WTC11 (cell line): ENCODE measurements at regions of chr12 and their contacts with region 1.

Region 1: DNA sequence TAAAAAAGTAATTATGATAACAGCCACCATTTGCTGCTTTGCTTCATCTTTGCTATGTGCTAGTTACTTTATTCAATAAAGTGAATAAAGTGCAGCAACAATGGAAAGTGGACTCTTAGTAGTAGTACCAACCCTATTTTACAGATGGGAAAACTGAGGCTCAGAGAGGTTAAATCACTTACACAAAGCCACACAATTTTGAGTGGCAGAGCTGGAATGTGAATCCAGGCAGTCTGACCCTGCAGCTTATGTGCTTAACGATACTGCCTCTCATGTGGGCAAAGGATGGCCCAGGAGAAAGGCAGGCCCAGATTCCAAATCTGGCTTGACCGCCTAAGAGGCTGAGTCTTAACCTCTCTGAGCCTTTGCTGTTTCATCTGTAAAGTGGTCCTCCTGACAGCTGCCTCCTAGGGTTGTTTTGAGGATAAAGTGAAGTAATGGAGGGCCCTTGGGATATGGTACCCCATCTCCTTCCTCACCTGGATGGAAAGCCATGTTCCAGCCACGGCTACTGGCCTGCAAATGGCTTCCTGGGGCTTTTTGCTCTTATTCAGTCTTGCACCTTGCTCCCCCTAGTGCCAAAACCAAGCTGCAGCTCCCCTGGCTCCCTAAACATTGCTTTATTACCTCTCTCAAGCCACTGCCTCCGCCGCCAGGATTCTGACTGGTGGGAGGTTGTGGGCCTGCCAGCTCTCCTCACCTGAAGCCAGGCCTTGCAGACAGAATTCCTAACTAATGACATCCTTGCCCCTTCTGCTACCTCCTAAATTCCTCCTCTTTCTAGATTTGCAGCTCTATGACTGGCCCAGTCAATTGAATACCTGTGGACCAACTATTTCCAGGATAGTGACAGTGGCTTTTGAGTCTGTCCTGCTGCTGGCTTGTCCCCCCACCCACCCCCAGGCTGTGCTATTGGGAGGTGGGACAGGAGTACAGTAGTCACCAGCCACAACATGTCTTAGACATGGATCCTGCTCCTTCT is 283.3 kb upstream of the PWP1 start:
- DNase-seq: peak; percentile 83
- ATAC-seq: peak; percentile 88
- H3K4me3 Mint-ChIP-seq: no peak overlapping the region
- H3K27ac Mint-ChIP-seq: no peak overlapping the region
- H3K4me1 Mint-ChIP-seq: peaks cover 35% of the 10 kb centered on the region
- H3K27me3 Mint-ChIP-seq: no peaks in the 10 kb centered on the region
- CTCF ChIP-seq: no peak; the same call in 1 of the 2 replicates

Region 2: DNA sequence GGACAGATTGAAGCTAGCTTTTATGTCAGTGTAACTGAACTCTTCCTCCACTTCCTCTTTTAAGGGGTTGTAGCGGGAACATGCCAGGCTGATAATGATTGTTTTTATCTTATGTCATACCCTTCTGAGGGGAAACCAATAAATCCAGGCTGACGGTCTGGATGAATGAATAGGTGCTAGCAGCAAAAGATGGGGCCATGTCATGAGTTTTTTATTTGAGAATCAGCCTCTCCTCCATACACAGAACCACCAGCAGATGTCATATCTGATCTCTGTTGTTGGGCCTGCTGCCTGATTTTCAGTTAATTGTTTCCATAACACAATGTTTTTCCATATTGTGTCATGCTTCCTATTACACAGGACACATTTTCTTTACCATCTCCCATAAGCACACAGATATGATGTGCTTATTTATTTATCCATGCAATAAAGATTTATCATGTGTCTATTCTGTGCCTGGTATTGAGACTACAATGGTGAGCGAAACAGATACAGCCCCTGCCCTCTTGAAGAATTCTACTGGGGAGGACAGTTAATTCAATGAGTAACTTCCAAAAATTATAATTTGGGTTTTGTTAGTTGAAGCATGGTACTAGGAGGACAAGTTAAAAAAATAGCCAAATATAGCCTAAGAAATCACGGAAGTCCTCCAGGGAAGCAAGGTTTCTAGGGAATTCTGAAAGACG is 275.4 kb before region 1 on chr12:
- CTCF ChIA-PET with region 1: interaction called, 70 read pairs
- POLR2A ChIA-PET with region 1: no interaction called
- DNase-seq: no peak
- ATAC-seq: peak; percentile 45
- H3K4me3 Mint-ChIP-seq: no peak overlapping the region
- H3K27ac Mint-ChIP-seq: no peak overlapping the region
- H3K4me1 Mint-ChIP-seq: peaks cover 35% of the 10 kb centered on the region
- H3K27me3 Mint-ChIP-seq: no peaks in the 10 kb centered on the region; the same call in 1 of the 2 replicates
- CTCF ChIP-seq: no peak

Region 3: DNA sequence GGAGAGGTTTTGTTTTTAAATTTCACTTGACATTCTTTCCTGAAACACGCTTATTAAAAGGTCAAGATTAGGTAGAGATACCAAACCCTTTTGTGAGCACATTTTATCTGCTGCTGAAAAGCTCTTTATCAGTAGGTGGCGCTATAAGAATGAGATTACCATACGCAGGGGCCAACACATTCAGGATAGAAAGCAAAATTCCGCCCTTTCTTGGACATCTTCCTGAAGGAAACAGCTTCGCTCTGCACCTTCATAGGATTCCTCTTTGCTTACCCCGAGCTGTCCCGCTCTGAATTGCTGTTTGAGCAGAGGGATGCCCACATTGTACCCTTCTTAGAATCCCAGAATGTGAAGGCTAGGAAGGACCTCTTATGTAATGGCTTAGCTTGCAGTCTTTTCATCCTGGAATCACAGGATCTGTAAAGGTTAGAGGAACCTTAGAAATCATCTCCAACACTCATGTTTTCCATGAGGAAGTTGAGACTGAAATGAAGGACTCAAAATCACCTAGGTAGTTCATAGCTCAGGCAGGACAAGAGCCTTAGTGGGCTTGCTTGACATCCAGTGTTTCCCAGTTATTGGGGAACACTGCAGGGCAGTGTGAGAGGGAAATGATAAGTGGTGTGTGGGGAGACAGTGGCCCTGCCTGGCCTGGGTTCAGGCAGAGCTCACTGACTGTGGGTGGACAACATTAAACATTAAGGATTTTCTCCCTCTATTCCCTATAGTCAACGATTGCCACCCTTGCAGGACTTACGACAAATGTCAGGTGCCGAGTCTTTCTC is 270.3 kb before region 1 on chr12:
- CTCF ChIA-PET with region 1: interaction called, 70 read pairs
- POLR2A ChIA-PET with region 1: interaction called, 3 read pairs
- DNase-seq: no peak
- ATAC-seq: peak; percentile 52
- H3K4me3 Mint-ChIP-seq: no peak overlapping the region
- H3K27ac Mint-ChIP-seq: no peak overlapping the region
- H3K4me1 Mint-ChIP-seq: peaks cover 34% of the 10 kb centered on the region
- H3K27me3 Mint-ChIP-seq: peaks cover 6% of the 10 kb centered on the region; the same call in 1 of the 2 replicates
- CTCF ChIP-seq: peak; percentile 37; the same call in 1 of the 2 replicates

Region 4: DNA sequence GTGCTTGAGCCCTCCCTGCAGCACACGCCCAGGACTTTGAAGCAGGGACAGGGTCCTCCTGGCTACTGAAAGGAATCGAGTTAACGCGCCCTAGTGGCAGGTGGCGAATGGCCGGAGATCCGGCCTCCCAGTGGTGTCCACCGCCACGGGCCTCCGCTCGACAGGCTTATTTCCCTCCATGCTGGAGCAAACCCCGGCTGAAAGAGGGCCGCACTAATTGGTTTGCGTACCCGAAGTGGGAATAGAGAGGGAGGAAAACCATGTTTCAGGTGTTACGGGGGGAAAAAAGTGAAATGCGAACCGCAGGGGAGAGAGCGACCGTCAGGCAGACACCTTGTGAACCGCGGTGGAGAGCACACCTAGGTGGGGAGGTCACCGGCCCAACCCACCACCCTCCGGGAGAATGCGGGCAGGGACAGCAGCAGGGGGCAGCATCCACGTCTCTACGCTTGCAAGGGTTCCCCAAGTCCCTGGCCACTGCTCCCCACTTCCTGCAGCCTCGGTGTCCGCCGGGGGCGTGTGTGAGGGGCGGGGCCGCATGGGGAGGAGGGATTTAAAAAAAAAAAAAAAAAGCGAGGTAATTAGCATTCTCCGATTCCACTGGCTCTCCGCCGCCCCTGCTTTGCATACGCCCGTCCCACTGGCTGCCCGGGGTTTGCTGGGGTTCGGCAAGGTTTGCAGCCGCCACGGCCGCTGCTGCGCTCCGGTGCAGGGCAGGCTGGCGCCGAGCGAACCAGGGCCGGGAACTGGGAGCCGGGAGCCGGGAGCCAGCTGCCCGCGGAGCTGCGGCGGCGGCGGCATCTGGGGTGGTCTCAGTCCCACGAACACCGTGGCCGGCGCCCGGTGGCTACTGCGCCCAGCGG is 84.3 kb before region 1 on chr12:
- CTCF ChIA-PET with region 1: interaction called, 21 read pairs
- POLR2A ChIA-PET with region 1: interaction called, 6 read pairs
- DNase-seq: peak; percentile 96
- ATAC-seq: peak; percentile 84
- H3K4me3 Mint-ChIP-seq: peak overlapping the region; percentile 96
- H3K27ac Mint-ChIP-seq: peak overlapping the region; percentile 89; the same call in 1 of the 2 replicates
- H3K4me1 Mint-ChIP-seq: peaks cover 30% of the 10 kb centered on the region
- H3K27me3 Mint-ChIP-seq: peaks cover 79% of the 10 kb centered on the region
- CTCF ChIP-seq: no peak